ENCODE measurements at regions of chr1 and their contacts with region 1.

Region 1: GRCh38 chr1:10867138-10867721 is 70.8 kb upstream of the CASZ1 start:
- DNase-seq: peak; percentile 62 to 84 (median 77)
- H3K4me3 ChIP-seq: peak overlapping the region; percentile 36
- H3K27ac ChIP-seq: no peak overlapping the region
- H3K4me1 ChIP-seq: peaks cover 6% of the 10 kb centered on the region
- H3K27me3 ChIP-seq: no peaks in the 10 kb centered on the region
- CTCF ChIP-seq: peak; percentile 24 to 85 (median 66)
- EP300 ChIP-seq: no peak
- POLR2A ChIP-seq: no peak

Region 2: GRCh38 chr1:10430216-10431069 is 436.8 kb before region 1 on chr1 and contains the start of gene CENPS:
- intact Hi-C with region 1: loop called in 1 of 4 experiments (anchors 5 kb)
- DNase-seq: peak; percentile 94 to 97 (median 94)
- H3K4me3 ChIP-seq: peak within 1 kb of the TSS; percentile 78
- H3K27ac ChIP-seq: peak within 1 kb of the TSS in 1 of 2 donors; percentile 19
- H3K4me1 ChIP-seq: no peaks in the 10 kb centered on the region
- H3K27me3 ChIP-seq: no peaks in the 10 kb centered on the region
- CTCF ChIP-seq: peak; percentile 97 to 99 (median 99)
- EP300 ChIP-seq: no peak
- POLR2A ChIP-seq: no peak
- total RNA-seq, gene CENPS: 1.5 to 13.6 (median 9.8) TPM

Region 3: DNA sequence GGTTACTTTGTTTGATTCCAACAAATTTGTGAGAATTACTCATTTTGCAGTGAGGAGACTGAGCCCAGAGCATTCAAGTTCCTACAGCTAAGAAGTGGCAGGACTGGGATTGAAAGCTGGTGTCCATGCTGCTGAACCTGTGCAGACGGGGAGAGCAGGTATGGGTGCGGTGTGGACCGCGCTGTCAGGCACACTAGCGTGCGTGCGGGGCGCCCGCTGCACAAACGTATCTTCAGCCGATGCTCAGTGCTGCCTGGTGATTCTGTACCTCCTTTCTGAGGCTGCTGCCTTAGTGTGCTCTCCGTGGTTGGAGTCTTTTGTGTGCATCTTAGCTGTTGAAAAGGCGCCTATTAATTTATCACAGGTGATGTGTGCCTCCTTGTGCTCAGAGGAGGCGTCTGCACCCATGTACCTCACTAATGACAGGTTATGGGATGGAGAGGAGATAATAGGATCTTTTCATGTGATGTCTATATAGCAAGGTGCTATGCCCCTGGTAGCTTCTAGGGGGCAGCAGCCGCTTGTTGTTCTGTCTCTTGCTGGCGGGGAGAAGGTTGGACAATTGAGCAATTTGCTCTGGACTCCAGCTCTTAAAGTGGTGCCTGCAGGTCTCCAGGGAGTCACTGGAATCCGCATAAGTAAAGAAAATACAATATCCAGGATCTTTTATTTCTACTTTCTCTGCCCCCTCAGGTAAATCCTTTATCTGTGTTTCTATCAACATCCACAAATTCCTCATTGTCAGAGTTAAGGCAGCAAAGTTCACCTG is 359.9 kb before region 1 on chr1:
- intact Hi-C with region 1: loop called in 3 of 4 experiments (anchors 5 kb)
- DNase-seq: peak; percentile 29 to 67 (median 48)
- H3K4me3 ChIP-seq: no peak overlapping the region
- H3K27ac ChIP-seq: no peak overlapping the region
- H3K4me1 ChIP-seq: peaks cover 2% of the 10 kb centered on the region
- H3K27me3 ChIP-seq: no peaks in the 10 kb centered on the region
- CTCF ChIP-seq: peak; percentile 30 to 53 (median 51)
- EP300 ChIP-seq: no peak
- POLR2A ChIP-seq: no peak

Region 4: GRCh38 chr1:10530281-10530740 is 336.9 kb before region 1 on chr1:
- intact Hi-C with region 1: loop called in 2 of 4 experiments (anchors 2 to 5 kb)
- DNase-seq: peak; percentile 56 to 83 (median 76)
- H3K4me3 ChIP-seq: no peak overlapping the region
- H3K27ac ChIP-seq: no peak overlapping the region
- H3K4me1 ChIP-seq: peaks cover 6% of the 10 kb centered on the region
- H3K27me3 ChIP-seq: no peaks in the 10 kb centered on the region
- CTCF ChIP-seq: peak; percentile 49 to 80 (median 53)
- EP300 ChIP-seq: no peak
- POLR2A ChIP-seq: no peak

Region 5: DNA sequence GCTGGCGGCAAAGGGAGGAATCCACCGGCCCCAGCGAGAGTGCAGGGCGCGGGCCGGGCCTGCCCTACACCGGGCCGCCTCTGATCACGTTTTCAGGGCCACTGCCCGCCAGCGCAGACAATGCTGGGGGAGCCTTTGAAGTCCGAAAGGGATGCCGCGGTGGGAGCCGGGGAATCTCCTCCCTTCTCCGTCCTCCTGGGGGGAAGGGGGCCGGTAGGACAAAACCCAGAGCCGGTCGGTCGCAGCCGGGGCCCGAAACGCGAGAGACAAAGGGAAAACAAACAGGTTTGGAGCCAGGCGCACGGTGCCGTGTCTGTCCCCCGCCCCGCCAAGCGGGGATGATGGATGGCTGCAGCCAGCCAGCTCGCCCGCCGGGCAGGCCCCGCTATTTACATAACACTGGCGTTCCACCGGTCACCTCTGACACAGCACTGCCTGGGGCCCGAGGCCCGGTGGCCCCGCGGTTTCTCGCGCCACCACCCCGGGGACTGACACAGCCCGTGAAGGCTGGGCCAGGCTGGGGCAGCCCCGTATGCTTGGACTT is 162.8 kb before region 1 on chr1:
- intact Hi-C with region 1: no loop called
- DNase-seq: no peak
- H3K4me3 ChIP-seq: no peak overlapping the region
- H3K27ac ChIP-seq: no peak overlapping the region
- H3K4me1 ChIP-seq: no peaks in the 10 kb centered on the region
- H3K27me3 ChIP-seq: no peaks in the 10 kb centered on the region
- CTCF ChIP-seq: no peak
- EP300 ChIP-seq: no peak
- POLR2A ChIP-seq: no peak

Region 6: DNA sequence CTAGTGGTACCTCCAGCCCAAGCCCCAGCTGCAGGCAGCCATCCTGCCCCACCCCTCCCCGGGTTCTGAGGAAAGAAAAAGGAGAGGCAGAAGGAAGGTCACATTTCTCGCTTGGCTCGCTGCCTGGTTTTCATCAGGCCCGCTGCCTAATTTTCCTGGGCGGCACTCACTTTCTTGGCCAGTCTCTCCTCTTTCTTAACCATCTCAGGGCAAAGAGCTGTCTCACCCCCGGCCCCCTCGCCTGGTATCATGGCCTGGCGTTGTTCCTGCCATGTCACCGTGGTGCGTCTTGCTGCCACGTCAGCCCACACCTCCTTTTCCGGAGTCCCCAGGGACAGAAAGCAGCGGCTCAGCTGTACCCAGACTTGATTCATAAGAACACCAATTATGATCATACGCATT is 44.2 kb before region 1 on chr1:
- intact Hi-C with region 1: no loop called
- DNase-seq: no peak
- H3K4me3 ChIP-seq: no peak overlapping the region
- H3K27ac ChIP-seq: no peak overlapping the region
- H3K4me1 ChIP-seq: no peaks in the 10 kb centered on the region
- H3K27me3 ChIP-seq: no peaks in the 10 kb centered on the region
- CTCF ChIP-seq: no peak
- EP300 ChIP-seq: no peak
- POLR2A ChIP-seq: no peak

Measured in ovary (tissue), 10 donors.